Natural killer cell (primary cell): ENCODE measurements at regions of chr2 and their contacts with region 1.

Region 1: GRCh38 chr2:26033818-26034636 is at the start of gene RAB10:
- DNase-seq: peak; percentile 97 to 99
- ATAC-seq: peak; percentile 82 to 97 (median 87)
- H3K4me3 ChIP-seq: peak within 1 kb of the TSS; percentile 71
- H3K4me3 Mint-ChIP-seq: peak within 1 kb of the TSS; percentile 95
- H3K27ac ChIP-seq: peak within 1 kb of the TSS; percentile 94
- H3K27ac Mint-ChIP-seq: peak within 1 kb of the TSS; percentile 88 to 98
- H3K4me1 ChIP-seq: peaks cover 33% of the 10 kb centered on the region
- H3K4me1 Mint-ChIP-seq: peaks cover 28 to 52% of the 10 kb centered on the region in 2 donors
- H3K27me3 ChIP-seq: no peaks in the 10 kb centered on the region
- H3K27me3 Mint-ChIP-seq: no peaks in the 10 kb centered on the region
- CTCF ChIP-seq: no peak
- total RNA-seq, gene RAB10: 35.8 to 44.2 (median 39.5) TPM

Region 2: GRCh38 chr2:26043862-26044696 is 10.1 kb after region 1 on chr2:
- intact Hi-C with region 1: loop called (anchors 1 kb)
- DNase-seq: peak in 1 of 2 donors; percentile 54
- ATAC-seq: peak; percentile 88 to 91 (median 90)
- H3K4me3 ChIP-seq: no peak overlapping the region
- H3K4me3 Mint-ChIP-seq: peak overlapping the region; percentile 65
- H3K27ac ChIP-seq: peak overlapping the region; percentile 58
- H3K27ac Mint-ChIP-seq: peak overlapping the region; percentile 77 to 78
- H3K4me1 ChIP-seq: peaks cover 15% of the 10 kb centered on the region
- H3K4me1 Mint-ChIP-seq: peaks cover 62% of the 10 kb centered on the region in 2 donors
- H3K27me3 ChIP-seq: no peaks in the 10 kb centered on the region
- H3K27me3 Mint-ChIP-seq: no peaks in the 10 kb centered on the region
- CTCF ChIP-seq: no peak

Region 3: GRCh38 chr2:26068602-26069298 is 34.7 kb after region 1 on chr2:
- intact Hi-C with region 1: loop called (anchors 1 kb)
- DNase-seq: peak in 1 of 2 donors; percentile 66
- ATAC-seq: peak; percentile 92 to 95 (median 93)
- H3K4me3 ChIP-seq: no peak overlapping the region
- H3K4me3 Mint-ChIP-seq: peak overlapping the region; percentile 59
- H3K27ac ChIP-seq: peak overlapping the region; percentile 40
- H3K27ac Mint-ChIP-seq: peak overlapping the region; percentile 61 to 86
- H3K4me1 ChIP-seq: peaks cover 16% of the 10 kb centered on the region
- H3K4me1 Mint-ChIP-seq: peaks cover 55 to 56% of the 10 kb centered on the region in 2 donors
- H3K27me3 ChIP-seq: no peaks in the 10 kb centered on the region
- H3K27me3 Mint-ChIP-seq: no peaks in the 10 kb centered on the region
- CTCF ChIP-seq: no peak